ENCODE measurements at regions of chr2 and their contacts with region 1.

Region 1: GRCh38 chr2:46923041-46923528 is 7.5 kb upstream of the MCFD2 start:
- DNase-seq: no peak
- H3K4me3 ChIP-seq: no peak overlapping the region
- H3K27ac ChIP-seq: no peak overlapping the region
- H3K4me1 ChIP-seq: no peaks in the 10 kb centered on the region
- H3K27me3 ChIP-seq: no peaks in the 10 kb centered on the region
- CTCF ChIP-seq: no peak

Region 2: DNA sequence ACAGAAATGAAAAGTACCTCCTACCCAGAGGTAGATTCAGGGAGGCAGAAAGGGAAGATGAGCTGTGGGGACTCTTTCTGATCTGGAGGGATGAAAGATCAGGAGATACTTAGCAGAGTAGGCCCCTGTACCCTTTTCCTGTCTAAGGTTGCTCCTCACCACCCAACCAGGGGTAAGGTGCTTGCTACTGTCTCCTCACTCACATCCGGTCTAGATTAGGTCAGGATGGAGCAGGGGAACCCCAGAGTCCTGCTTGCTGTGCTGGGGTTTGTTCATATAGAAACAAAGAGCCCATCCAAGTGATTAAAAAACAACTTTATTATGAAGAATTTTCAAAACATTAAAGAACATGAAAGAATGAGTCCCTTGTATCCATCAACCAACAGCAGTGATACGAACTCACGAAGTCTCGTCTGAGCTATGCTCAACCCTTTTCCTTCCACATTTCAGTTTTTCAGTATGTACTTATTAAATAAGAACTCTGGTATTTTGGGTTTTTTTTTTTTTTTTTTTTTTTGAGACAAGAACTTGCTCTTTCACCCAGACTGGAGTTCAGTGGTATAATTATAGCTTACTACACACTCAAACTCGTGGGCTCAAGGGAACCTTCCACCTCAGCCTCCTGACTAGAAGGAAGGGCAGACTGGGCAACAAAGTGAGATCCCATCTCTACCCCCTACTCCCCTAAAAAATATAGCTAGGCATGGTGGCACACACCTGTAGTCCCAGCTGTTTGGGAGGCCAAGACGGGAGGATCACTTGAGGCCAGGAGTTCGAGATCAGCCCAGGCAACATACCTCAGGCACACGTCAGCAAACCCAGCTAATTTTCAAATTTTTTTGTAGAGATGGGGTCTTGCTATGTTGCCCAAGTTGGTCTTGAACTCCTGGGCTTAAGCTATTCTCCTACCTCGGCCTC is 21.1 kb after region 1 on chr2:
- intact Hi-C with region 1: no loop called
- DNase-seq: no peak
- H3K4me3 ChIP-seq: peak overlapping the region in 1 of 2 donors; percentile 93
- H3K27ac ChIP-seq: peak overlapping the region; percentile 3 to 83
- H3K4me1 ChIP-seq: peaks cover 0 to 74% (median 42%) of the 10 kb centered on the region in 4 donors
- H3K27me3 ChIP-seq: no peaks in the 10 kb centered on the region
- CTCF ChIP-seq: no peak

Region 3: GRCh38 chr2:47323009-47323821 is 400.1 kb after region 1 on chr2:
- intact Hi-C with region 1: loop called (anchors 10 kb)
- DNase-seq: peak; percentile 71 to 82
- H3K4me3 ChIP-seq: no peak overlapping the region
- H3K27ac ChIP-seq: no peak overlapping the region
- H3K4me1 ChIP-seq: peaks cover 0 to 8% (median 1%) of the 10 kb centered on the region in 4 donors
- H3K27me3 ChIP-seq: no peaks in the 10 kb centered on the region
- CTCF ChIP-seq: peak; percentile 99

Measured in tibial artery (tissue), 4 donors.